Prostate gland (tissue), 2 donors: ENCODE measurements at regions of chr1 and their contacts with region 1.

Region 1: DNA sequence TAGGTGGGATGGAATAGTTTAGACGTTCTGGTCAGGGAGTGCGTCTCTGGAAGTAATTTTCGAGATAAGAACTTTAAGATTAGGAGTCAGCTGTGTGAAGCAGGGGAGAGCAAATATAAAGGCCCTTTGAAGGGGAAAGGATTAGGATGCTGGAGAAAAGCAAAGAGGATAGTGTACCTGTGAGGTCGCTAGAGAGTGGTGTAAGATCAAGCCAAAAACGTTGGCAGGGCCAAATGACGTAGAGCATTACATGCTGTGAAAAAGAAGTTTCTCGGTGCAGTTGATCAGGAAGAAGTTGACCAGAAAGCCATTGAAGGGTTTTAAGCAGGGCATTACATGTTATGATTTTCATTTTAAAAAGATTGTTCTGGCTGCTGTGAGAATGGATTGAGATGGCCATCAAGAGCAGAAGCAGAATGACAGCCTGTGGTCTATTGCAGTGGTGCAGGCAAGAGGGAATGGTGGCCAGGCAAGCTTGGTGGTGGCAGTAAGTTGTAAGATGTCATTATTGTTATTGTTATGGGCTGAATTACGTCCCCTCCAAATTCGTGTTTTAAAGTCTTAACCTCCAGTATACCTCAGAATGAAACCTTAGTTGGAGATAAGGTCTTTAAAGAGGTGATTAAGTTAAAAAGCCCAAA is 113.6 kb upstream of the KIF26B start:
- DNase-seq: no peak
- H3K4me3 ChIP-seq: no peak overlapping the region
- H3K27ac ChIP-seq: no peak overlapping the region
- H3K4me1 ChIP-seq: no peaks in the 10 kb centered on the region
- H3K27me3 ChIP-seq: no peaks in the 10 kb centered on the region
- CTCF ChIP-seq: no peak
- POLR2A ChIP-seq: no peak

Region 2: DNA sequence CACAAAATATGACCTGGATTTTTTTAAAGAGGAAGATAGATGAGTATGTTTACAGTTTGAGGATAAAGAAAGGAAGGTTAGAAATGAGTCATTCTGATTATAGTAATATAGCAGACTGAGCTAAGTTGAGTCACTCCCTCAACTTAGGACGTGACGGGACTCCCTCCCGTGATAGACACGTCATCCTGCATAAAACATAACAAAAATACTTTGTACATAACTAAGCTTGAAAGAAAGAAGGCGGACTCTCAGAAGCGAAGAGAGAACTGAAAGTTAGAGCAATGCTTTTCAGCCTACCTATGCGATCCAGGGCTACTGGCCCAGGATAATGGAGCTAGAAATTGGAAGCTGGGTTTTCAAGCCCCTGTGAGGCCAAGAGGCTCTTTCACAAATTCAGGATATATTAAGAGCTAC is 441.2 kb before region 1 on chr1:
- intact Hi-C with region 1: loop called (anchors 5 kb)
- DNase-seq: no peak
- H3K4me3 ChIP-seq: no peak overlapping the region
- H3K27ac ChIP-seq: no peak overlapping the region
- H3K4me1 ChIP-seq: no peaks in the 10 kb centered on the region
- H3K27me3 ChIP-seq: no peaks in the 10 kb centered on the region
- CTCF ChIP-seq: no peak
- POLR2A ChIP-seq: peak; percentile 29

Region 3: DNA sequence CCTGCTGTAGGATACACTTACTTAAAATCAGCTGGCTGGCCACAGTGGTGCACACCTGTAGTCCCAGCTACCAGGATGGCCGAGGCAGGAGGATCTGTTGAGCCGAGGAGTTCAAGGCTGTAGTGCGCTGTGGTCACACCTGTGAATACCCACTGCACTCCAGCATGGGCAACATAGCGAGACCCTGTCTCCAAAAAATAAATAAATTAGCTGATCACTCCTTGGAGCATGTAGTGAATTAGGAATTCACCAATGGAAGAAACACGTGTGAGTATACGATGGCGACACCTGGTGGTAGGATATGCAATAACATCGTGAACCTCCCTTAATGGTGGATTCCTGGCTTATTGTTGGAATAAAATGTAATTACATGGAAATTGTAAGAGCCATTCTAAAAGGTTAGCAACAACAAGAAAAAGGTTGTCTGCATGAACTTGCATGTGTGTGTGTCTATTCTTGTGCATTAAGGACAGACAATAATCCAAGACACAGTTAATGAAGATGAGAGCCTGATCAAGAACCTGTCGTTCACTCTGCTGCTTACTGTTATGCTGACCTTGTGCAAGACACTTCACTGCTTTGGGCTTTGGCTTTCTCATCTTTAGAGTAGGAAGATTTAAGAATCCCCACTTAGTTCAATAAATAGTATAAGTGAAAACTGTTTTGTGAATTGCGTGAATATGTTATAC is 244.3 kb before region 1 on chr1:
- intact Hi-C with region 1: loop called (anchors 5 kb)
- DNase-seq: peak; percentile 51
- H3K4me3 ChIP-seq: no peak overlapping the region
- H3K27ac ChIP-seq: no peak overlapping the region
- H3K4me1 ChIP-seq: no peaks in the 10 kb centered on the region
- H3K27me3 ChIP-seq: no peaks in the 10 kb centered on the region
- CTCF ChIP-seq: peak; percentile 65 to 96 (median 84)
- POLR2A ChIP-seq: no peak

Region 4: GRCh38 chr1:244864253-244865027 is 176.7 kb before region 1 on chr1 and contains the start of gene HNRNPU:
- intact Hi-C with region 1: loop called (anchors 5 kb)
- DNase-seq: peak; percentile 97
- H3K4me3 ChIP-seq: peak within 1 kb of the TSS; percentile 91 to 95
- H3K27ac ChIP-seq: peak within 1 kb of the TSS; percentile 100
- H3K4me1 ChIP-seq: peaks cover 4% of the 10 kb centered on the region
- H3K27me3 ChIP-seq: no peaks in the 10 kb centered on the region
- CTCF ChIP-seq: peak in 2 of 4 experiments; percentile 18 to 62
- POLR2A ChIP-seq: peak; percentile 100
- total RNA-seq, gene HNRNPU: 302 to 350 TPM